ENCODE measurements at regions of chr3 and their contacts with region 1.

Region 1: GRCh38 chr3:48885753-48886152 is 12.9 kb downstream of the SLC25A20 start:
- DNase-seq: no peak
- ATAC-seq: no peak
- H3K4me3 Mint-ChIP-seq: no peak overlapping the region
- H3K27ac Mint-ChIP-seq: no peak overlapping the region
- H3K4me1 Mint-ChIP-seq: no peaks in the 10 kb centered on the region
- H3K27me3 Mint-ChIP-seq: no peaks in the 10 kb centered on the region
- CTCF ChIP-seq: no peak

Region 2: GRCh38 chr3:48258530-48258929 is 627.2 kb before region 1 on chr3:
- CTCF ChIA-PET with region 1: no interaction called
- POLR2A ChIA-PET with region 1: interaction called, 13 read pairs
- intact Hi-C with region 1: no loop called
- DNase-seq: no peak
- ATAC-seq: no peak
- H3K4me3 Mint-ChIP-seq: no peak overlapping the region
- H3K27ac Mint-ChIP-seq: no peak overlapping the region
- H3K4me1 Mint-ChIP-seq: no peaks in the 10 kb centered on the region
- H3K27me3 Mint-ChIP-seq: no peaks in the 10 kb centered on the region
- CTCF ChIP-seq: no peak

Region 3: GRCh38 chr3:48952510-48953118 is 66.9 kb after region 1 on chr3:
- CTCF ChIA-PET with region 1: no interaction called
- POLR2A ChIA-PET with region 1: no interaction called
- intact Hi-C with region 1: no loop called
- DNase-seq: no peak
- ATAC-seq: peak; percentile 31
- H3K4me3 Mint-ChIP-seq: no peak overlapping the region
- H3K27ac Mint-ChIP-seq: no peak overlapping the region
- H3K4me1 Mint-ChIP-seq: no peaks in the 10 kb centered on the region
- H3K27me3 Mint-ChIP-seq: no peaks in the 10 kb centered on the region
- CTCF ChIP-seq: no peak

Region 4: GRCh38 chr3:49093853-49094767 is 208.4 kb after region 1 on chr3 and contains the start of gene QRICH1:
- CTCF ChIA-PET with region 1: no interaction called
- POLR2A ChIA-PET with region 1: no interaction called
- intact Hi-C with region 1: no loop called
- DNase-seq: peak; percentile 95
- ATAC-seq: peak; percentile 78
- H3K4me3 Mint-ChIP-seq: peak within 1 kb of the TSS; percentile 97
- H3K27ac Mint-ChIP-seq: peak within 1 kb of the TSS; percentile 97
- H3K4me1 Mint-ChIP-seq: peaks cover 46% of the 10 kb centered on the region
- H3K27me3 Mint-ChIP-seq: no peaks in the 10 kb centered on the region
- CTCF ChIP-seq: no peak
- total RNA-seq, gene QRICH1: 142 and 155 TPM in 2 replicates

Region 5: GRCh38 chr3:50211930-50212329 is 1326.2 kb after region 1 on chr3:
- CTCF ChIA-PET with region 1: no interaction called
- POLR2A ChIA-PET with region 1: no interaction called
- intact Hi-C with region 1: no loop called
- DNase-seq: no peak
- ATAC-seq: no peak
- H3K4me3 Mint-ChIP-seq: no peak overlapping the region
- H3K27ac Mint-ChIP-seq: no peak overlapping the region
- H3K4me1 Mint-ChIP-seq: no peaks in the 10 kb centered on the region
- H3K27me3 Mint-ChIP-seq: peaks cover 11% of the 10 kb centered on the region
- CTCF ChIP-seq: no peak

Measured in activated B cell treated with CpG ODN at 0.5 μM for 24 hours (primary cell).